ENCODE measurements at regions of chr1 and their contacts with region 1.

Region 1: DNA sequence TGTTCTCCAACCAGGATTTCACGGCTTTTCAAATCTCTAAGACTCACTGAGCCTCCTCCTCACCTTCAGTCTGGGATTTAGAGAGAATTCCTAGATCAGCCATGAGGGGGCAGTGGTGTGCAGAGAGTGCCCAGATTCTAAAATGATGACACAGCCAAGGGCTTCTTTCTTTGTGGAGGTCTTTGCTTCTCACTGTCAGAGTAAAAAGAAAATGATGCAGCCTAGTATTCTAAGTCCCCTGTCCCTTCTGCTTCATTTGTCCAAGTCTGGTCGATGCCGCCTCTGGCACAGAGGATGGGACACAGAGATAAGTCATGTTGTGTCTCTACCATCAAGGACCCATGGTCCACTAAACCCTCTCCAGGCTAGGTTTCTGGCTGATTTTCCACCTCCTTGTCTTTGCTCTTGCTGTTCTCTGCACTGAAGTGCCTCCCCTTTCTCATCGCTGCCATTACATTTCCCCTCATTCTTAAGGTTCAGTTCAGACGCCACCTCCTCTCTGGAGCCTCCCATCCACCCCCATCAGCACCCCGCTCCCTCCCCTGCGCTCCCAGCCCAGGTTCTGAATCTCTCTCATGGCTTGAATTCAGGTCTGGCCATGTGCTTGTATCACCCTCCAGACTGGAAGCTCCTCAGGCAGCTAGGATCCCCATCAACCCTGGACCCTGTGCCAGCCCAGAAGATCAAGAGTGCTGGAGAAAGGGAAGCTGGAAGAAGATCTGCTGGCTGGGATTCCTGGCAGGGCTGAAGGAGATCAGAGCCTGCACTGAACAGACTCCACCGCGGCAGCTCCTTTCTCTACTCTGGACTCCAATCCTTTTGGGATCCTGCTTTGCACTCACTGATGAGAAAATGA is 12.0 kb upstream of the TINAGL1 start:
- DNase-seq: peak; percentile 61 to 63
- H3K4me3 ChIP-seq: no peak overlapping the region
- H3K27ac ChIP-seq: peak overlapping the region; percentile 3 to 50
- H3K4me1 ChIP-seq: peaks cover 0 to 5% of the 10 kb centered on the region in 2 donors
- H3K27me3 ChIP-seq: no peaks in the 10 kb centered on the region
- CTCF ChIP-seq: peak; percentile 86 to 94 (median 90)
- POLR2A ChIP-seq: no peak

Region 2: DNA sequence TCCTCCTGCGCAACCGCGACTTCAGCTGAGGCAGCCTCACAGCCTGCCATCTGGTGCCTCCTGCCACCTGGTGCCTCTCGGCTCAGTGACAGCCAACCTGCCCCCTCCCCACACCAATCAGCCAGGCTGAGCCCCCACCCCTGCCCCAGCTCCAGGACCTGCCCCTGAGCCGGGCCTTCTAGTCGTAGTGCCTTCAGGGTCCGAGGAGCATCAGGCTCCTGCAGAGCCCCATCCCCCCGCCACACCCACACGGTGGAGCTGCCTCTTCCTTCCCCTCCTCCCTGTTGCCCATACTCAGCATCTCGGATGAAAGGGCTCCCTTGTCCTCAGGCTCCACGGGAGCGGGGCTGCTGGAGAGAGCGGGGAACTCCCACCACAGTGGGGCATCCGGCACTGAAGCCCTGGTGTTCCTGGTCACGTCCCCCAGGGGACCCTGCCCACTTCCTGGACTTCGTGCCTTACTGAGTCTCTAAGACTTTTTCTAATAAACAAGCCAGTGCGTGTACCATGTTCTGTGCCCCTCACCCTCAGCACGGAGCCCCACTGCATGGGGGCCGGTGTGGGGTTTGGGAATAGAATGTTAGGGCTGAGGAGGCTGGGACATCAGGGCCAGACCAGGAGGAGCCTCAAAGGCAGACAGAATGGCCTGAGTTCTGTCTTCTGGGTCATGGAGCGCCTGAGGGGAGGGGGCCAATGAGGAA is 130.0 kb before region 1 on chr1:
- intact Hi-C with region 1: no loop called
- DNase-seq: no peak
- H3K4me3 ChIP-seq: no peak overlapping the region
- H3K27ac ChIP-seq: no peak overlapping the region
- H3K4me1 ChIP-seq: no peaks in the 10 kb centered on the region
- H3K27me3 ChIP-seq: no peaks in the 10 kb centered on the region
- CTCF ChIP-seq: no peak
- POLR2A ChIP-seq: no peak

Region 3: DNA sequence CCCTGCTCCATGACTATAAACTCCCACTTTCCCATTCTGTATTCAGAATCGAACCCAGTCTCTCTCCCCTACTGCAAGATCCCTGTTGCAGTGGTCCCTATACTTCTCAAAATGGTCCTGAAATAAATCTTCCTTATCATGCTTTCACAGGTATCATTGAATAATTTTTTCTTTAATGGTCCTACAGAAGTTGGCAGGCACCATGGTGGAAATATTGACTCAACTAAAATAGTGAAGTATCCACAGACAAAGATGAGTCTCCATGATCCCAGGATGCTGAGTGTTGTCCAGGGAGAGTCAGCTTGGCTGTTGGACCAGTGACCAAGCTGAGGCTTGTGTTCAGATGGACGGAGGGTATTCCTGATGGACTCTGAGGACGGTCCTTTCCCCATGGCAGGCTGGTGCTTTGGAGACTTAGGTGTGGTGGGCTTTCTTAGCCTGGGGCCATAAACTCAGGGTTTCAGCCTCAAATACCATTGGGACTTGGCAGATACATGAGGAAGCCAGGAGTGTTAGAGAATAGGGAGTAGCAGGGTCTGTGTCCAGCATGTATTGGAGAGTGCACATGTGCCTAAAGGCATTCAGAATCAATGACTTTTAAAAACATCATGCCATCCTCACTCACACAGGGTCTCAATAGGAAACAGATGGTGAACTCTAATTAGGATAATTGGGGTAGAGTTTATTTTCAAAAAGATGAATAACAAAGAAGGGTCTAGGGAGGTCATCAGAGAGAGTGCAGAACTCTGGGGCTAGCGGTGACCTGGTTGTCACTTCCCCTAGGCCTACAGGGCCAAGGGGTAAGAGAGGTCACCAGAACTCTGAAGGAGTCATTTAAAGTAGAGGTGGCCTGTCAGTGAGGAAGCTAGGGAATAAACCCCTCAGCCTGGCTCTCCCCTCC is 31.7 kb after region 1 on chr1:
- intact Hi-C with region 1: loop called (anchors 5 kb)
- DNase-seq: no peak
- H3K4me3 ChIP-seq: no peak overlapping the region
- H3K27ac ChIP-seq: no peak overlapping the region
- H3K4me1 ChIP-seq: no peaks in the 10 kb centered on the region
- H3K27me3 ChIP-seq: no peaks in the 10 kb centered on the region
- CTCF ChIP-seq: no peak
- POLR2A ChIP-seq: no peak

Region 4: DNA sequence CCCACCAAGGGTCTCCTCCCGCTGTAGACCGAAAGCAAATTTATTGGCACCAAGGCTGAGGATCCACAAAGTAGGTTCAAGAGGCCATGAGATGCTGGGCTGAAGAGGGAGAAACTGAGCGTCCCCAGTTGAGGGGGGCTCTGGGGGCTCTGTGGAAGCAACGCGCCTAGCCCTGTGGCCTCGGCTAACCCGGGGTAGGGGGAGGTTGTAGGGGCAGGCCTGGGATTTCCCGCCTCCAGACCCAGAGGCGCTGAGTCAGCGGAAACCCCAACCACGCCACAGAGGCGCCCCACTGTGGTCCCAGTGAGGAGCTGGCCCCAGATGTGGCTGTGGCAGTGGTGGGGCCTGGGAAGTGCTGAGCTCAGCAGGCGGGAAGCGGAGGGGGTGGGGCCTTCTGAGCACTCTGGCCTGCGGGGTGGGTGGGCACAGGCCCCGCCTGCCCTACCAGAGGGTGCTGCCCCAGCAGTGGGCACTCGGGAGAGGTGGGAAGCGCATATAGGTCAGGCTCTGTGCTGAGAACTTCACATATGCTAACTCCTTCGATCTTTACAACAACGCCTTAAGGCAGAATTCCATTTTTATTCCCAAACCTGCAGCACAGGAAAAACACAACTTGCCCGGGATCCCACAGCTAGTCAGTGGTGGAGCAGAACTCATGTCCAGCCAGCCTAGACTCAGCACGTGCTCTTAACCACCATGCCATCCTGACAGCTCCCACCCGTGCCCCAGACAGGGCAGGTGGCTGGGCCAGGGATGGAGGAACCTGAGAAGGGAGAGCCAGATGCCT is 140.9 kb after region 1 on chr1:
- intact Hi-C with region 1: no loop called
- DNase-seq: peak; percentile 63 to 71
- H3K4me3 ChIP-seq: no peak overlapping the region
- H3K27ac ChIP-seq: peak overlapping the region; percentile 80 to 89
- H3K4me1 ChIP-seq: peaks cover 11 to 22% of the 10 kb centered on the region in 2 donors
- H3K27me3 ChIP-seq: no peaks in the 10 kb centered on the region
- CTCF ChIP-seq: peak; percentile 14 to 49 (median 38)
- POLR2A ChIP-seq: no peak